Activated CD8-positive, alpha-beta T cell treated with anti-CD3 and anti-CD28 coated beads for 36 hours (primary cell): ENCODE measurements at regions of chr5 and their contacts with region 1.

Region 1: DNA sequence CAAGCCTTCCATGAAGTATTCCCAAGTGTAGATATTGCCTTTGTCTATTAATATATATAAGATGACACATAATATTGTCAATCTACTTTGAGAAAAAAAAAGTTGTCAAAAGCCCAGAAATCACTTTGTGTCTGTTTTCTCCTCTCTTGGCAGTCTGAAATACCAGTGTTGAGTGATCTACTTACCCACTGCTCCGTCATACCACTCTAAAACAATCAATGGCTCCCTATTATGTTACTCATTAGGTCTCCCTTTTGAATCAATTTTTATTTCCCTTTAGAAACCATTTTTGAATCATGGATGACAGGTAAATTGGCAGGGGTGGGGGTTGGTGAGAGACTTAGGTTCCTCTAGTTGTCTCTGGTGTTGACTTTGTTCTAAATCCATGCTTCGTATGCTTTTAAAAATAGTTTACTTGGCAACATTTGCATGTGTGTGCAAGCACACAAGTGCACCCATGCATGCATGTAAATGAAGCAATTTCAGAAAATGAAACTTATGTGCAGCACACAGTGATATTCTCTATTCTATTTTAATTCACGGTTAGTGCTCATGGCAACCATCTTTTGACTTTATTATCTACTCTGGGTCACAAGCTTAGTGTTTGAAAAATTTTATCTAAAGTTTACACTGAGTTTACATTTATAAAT is 378.9 kb downstream of the RAB3C start:
- DNase-seq: no peak
- ATAC-seq: no peak
- H3K4me3 Mint-ChIP-seq: no peak overlapping the region
- H3K27ac Mint-ChIP-seq: no peak overlapping the region
- H3K4me1 Mint-ChIP-seq: no peaks in the 10 kb centered on the region
- H3K27me3 Mint-ChIP-seq: peaks cover 1% of the 10 kb centered on the region
- CTCF ChIP-seq: no peak

Region 2: DNA sequence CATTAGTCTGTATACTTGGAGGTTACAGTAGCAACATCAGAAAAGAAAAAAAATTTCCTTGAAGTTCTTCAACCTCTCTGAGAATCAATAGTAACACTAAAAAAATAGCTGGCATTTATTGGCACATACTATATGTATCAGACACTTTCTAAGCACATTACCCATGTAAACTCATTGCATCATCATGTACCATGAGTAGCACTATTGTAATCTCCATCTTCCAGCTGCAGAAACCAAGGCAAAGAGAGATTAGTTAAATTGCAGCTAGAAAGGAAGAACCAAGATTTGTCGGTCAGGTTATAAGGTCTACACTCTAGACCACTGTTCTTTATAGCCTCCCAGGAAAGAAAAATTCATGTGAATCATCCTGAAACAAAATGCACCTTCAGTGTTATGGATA is 410.3 kb before region 1 on chr5:
- CTCF ChIA-PET with region 1: no interaction called
- POLR2A ChIA-PET with region 1: no interaction called
- intact Hi-C with region 1: no loop called
- DNase-seq: no peak
- ATAC-seq: no peak
- H3K4me3 Mint-ChIP-seq: no peak overlapping the region
- H3K27ac Mint-ChIP-seq: no peak overlapping the region
- H3K4me1 Mint-ChIP-seq: no peaks in the 10 kb centered on the region
- H3K27me3 Mint-ChIP-seq: no peaks in the 10 kb centered on the region
- CTCF ChIP-seq: no peak

Region 3: DNA sequence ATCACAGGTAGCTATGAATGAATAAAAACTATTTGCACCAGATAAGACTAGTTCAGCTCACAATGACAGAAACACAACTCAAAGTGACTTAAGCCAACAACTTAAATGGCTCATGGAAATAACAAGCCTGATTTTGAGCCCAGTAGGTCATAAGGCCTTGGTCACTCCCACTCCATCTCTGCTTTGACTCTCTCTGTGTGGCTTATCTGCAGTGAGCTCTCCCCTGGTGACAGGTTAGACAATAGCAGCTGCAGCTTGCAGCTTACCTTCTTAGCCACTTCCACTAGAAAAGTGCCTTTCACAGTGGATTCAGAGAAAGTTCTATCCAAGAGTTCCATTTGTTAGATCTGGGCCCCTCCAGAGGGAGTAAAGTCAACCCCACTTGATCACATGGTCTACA is 63.2 kb before region 1 on chr5:
- CTCF ChIA-PET with region 1: interaction called, 3 read pairs
- POLR2A ChIA-PET with region 1: no interaction called
- intact Hi-C with region 1: loop called (anchors 5 kb)
- DNase-seq: no peak
- ATAC-seq: no peak
- H3K4me3 Mint-ChIP-seq: no peak overlapping the region
- H3K27ac Mint-ChIP-seq: no peak overlapping the region
- H3K4me1 Mint-ChIP-seq: no peaks in the 10 kb centered on the region
- H3K27me3 Mint-ChIP-seq: no peaks in the 10 kb centered on the region
- CTCF ChIP-seq: no peak

Region 4: DNA sequence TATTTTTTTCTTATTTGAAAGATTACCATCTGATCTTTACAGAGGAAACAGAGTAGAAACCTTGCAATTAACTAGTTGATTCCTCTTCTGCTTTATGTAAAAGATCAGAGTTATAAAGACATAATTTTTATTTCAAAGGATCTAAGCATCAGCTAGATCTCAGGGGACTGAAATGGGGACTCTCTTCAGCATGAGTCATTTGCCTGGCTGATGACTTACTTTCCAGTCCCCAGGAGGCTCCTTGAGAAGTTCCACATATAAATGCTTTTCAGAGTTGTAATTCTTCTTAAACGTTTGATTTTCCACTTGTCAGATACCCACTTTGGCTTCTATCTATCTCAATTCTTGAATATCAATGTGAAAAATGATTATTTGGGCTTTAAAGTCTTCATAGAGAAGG is 10.5 kb after region 1 on chr5:
- CTCF ChIA-PET with region 1: no interaction called
- POLR2A ChIA-PET with region 1: no interaction called
- intact Hi-C with region 1: no loop called
- DNase-seq: no peak
- ATAC-seq: no peak
- H3K4me3 Mint-ChIP-seq: no peak overlapping the region
- H3K27ac Mint-ChIP-seq: no peak overlapping the region
- H3K4me1 Mint-ChIP-seq: peaks cover 5% of the 10 kb centered on the region
- H3K27me3 Mint-ChIP-seq: no peaks in the 10 kb centered on the region
- CTCF ChIP-seq: no peak

Region 5: DNA sequence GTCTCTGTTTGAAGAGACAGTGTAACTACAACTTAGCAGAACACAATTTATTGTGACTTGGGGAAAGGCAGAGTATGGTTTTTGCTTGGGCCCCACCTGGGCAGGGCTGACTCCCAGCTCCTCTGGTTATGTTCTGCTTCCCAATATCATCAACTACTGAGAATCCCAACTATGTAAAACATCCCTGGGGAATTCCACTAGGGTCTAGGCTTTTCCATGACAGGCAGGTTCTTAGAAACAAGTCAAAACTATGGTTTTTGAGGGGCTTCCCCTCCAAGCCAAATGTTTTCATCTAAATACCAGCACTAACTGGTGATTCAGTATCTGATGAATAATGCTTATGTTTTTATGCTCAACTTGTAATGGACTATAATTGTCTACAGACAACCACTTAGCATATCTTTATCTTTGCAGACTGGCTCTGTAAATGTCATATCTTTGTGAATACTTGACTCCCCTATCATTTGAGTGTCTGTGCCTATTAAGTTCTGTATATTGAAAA is 522.3 kb after region 1 on chr5:
- CTCF ChIA-PET with region 1: no interaction called
- POLR2A ChIA-PET with region 1: no interaction called
- intact Hi-C with region 1: no loop called
- DNase-seq: peak; percentile 27
- ATAC-seq: peak; percentile 79
- H3K4me3 Mint-ChIP-seq: no peak overlapping the region
- H3K27ac Mint-ChIP-seq: peak overlapping the region; percentile 44
- H3K4me1 Mint-ChIP-seq: peaks cover 10% of the 10 kb centered on the region
- H3K27me3 Mint-ChIP-seq: no peaks in the 10 kb centered on the region
- CTCF ChIP-seq: no peak